ENCODE measurements at regions of chr18 and their contacts with region 1.

Region 1: DNA sequence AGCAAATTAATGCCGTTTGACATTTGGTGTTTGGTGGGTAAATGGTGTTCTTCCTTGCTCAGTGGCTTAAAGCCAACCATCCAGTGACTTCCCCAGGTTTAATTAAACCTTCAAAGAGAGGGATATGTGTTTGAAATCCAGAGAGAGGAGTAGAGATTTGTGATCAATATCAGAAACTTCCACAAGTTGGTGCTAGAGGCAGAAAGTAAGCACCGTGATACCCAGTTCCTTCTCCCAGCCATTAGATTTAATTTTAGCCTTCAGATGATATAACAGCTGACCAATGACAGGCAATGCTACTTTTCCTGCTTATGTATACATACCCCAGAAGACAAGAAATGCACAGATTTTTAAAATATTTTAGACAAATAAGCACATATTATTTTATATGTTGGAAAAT is 398.5 kb downstream of the CDH2 start:
- DNase-seq: no peak
- H3K4me3 ChIP-seq: no peak overlapping the region
- CTCF ChIP-seq: peak; percentile 48

Region 2: DNA sequence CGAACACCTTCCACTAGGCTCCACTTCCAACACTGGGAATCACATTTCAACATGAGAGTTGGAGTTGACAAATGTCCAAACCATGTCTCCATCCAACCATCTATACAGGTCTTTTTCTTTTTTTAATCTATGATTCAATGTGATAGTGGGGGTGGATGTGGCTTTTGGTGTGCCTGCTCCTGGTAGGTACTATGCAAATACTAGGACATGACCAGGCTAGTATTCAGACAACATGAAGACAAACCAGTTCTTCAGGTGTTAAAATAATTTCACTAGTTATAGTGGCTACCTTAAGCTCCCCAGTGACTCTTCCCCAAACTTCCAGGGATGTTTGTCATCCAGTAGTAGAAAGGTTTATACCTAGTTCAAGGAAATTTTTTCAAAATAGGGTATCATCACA is 11.0 kb after region 1 on chr18:
- CTCF ChIA-PET with region 1: interaction called, 12 read pairs
- POLR2A ChIA-PET with region 1: no interaction called
- DNase-seq: no peak
- H3K4me3 ChIP-seq: no peak overlapping the region
- CTCF ChIP-seq: no peak